Activated CD8-positive, alpha-beta memory T cell treated with anti-CD3 and anti-CD28 coated beads, Interleukin-2, amount 10 ng/mL, durations not matched to agents 7 days and 5 days (primary cell): ENCODE measurements at regions of chr11 and their contacts with region 1.

Region 1: DNA sequence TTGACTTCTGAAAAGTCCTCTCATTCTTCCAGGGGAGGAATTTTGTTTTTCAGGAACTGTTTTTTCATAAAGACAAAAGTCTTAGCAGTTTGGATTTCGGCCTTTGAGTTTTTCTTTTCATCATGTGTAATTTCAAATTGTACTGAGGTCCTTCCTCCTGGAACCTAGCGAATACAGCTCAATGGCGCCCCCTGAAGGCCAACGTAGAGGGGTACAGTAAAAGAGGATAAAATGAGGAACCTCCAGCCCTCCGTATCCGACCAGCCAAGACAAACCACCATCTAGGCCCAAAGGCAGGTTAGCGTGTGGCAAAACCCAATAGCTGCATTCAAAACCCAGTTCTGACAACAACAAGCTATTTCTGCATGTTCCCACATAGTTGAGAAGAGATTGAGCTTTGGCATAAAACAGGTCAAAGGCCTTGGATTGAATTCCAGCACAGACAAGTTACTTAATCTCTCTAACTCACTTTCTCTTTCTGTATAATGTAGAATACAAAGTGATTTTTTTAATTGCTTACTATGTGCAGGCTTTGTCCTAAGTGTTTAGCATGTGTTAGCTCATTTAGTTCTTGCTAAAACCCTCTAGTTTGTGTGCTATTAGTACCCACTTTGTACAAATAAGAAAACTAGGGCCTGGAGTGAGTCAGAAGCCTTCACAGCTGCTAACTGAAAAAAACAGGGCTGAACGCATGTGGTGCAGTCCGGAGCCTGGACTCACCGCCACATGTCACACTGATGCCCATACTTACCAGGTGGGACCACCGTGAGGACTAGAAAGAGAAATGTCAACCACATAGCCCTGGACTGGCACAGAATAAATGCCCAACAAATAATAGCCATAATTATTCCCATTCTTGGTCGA is 43.2 kb upstream of the ETS1 start:
- DNase-seq: peak; percentile 93
- ATAC-seq: peak; percentile 84
- H3K4me3 Mint-ChIP-seq: peak overlapping the region; percentile 52
- H3K27ac Mint-ChIP-seq: peak overlapping the region; percentile 93
- H3K4me1 Mint-ChIP-seq: peaks cover 67% of the 10 kb centered on the region
- H3K27me3 Mint-ChIP-seq: no peaks in the 10 kb centered on the region

Region 2: DNA sequence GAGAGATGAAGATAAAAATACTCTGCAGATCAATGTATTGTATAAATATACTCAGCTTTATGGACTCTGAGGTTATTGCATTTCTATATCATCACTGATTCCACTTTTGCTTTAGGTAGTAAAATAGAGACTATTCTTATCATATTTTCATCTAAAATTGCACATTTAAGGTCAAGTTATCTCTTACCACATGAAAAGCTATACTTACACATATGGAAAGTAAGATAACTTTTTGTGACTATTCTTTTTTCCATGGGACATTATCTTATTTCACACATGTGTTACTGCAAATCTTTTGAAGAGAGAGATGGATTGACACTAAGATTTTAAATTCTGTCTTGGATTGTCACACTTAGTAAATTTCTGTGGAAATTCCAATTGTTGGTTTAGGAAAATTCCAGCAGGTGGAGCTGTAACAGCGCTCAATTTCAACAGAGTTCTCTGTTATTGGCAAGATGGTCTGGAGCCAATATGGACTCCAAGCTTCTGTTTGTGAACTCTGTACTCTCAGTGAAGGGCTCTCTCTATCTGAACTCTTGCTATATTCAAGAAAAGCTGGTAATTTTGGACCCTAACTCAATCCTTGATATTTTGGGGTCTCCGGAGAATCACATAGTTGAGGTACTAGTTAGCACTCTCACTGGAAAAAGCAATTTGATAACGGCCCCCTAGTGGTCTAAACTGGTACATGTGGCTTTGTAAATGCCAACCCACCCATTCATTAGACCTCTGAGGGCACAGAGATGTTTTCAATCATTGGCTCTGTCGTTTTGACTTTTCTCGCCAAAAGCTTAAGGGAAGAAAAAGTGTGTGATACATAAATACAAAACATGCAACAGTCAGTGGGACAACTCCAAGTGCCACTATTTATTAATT is 472.9 kb before region 1 on chr11:
- CTCF ChIA-PET with region 1: interaction called, 73 read pairs
- DNase-seq: peak; percentile 67
- ATAC-seq: peak; percentile 91
- H3K4me3 Mint-ChIP-seq: peak overlapping the region; percentile 47
- H3K27ac Mint-ChIP-seq: peak overlapping the region; percentile 77
- H3K4me1 Mint-ChIP-seq: peaks cover 4% of the 10 kb centered on the region
- H3K27me3 Mint-ChIP-seq: peaks cover 9% of the 10 kb centered on the region

Region 3: DNA sequence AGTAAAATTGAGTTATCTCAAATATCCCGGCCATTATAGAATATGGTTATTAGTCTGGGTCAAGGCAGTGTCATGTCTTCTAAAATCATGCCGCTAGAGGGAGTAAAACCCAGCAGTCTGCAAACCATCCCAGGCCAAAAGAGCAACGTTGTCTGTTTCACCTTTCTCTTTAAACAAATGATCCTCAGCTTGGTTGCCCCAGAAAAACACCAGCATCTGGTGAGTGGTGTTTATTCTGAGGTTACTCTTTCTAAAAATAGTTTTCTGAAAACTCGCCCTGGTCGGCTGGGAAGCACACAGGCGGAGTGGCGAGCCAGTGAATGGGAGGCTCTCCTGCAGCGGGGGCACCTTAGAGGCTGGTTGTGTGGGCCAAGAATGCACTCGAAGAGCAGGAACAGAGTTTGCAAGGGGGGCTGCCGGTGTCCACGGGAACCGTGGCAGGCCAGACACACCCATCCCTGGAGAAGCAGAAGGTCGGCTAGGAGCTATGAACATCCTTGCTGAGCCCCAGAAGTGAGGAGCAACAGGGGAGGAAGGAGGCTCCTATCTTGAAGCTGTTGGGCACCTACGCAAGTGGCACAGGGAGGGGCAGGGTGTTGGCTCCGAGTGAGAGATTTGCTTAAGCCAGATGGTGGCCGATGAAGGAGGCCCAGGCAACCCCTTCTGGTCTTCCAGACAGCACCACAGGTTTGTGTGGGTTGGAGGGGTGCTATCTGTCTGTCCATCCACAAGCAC is 340.3 kb before region 1 on chr11:
- CTCF ChIA-PET with region 1: interaction called, 92 read pairs
- DNase-seq: peak; percentile 86
- ATAC-seq: peak; percentile 70
- H3K4me3 Mint-ChIP-seq: peak overlapping the region; percentile 86
- H3K27ac Mint-ChIP-seq: peak overlapping the region; percentile 92
- H3K4me1 Mint-ChIP-seq: peaks cover 86% of the 10 kb centered on the region
- H3K27me3 Mint-ChIP-seq: no peaks in the 10 kb centered on the region

Region 4: GRCh38 chr11:128465946-128466705 is 164.5 kb before region 1 on chr11:
- CTCF ChIA-PET with region 1: interaction called, 25 read pairs
- DNase-seq: no peak
- ATAC-seq: peak; percentile 5
- H3K4me3 Mint-ChIP-seq: peak overlapping the region; percentile 62
- H3K27ac Mint-ChIP-seq: peak overlapping the region; percentile 82
- H3K4me1 Mint-ChIP-seq: peaks cover 89% of the 10 kb centered on the region
- H3K27me3 Mint-ChIP-seq: no peaks in the 10 kb centered on the region

Region 5: GRCh38 chr11:128506999-128507611 is 123.5 kb before region 1 on chr11:
- CTCF ChIA-PET with region 1: interaction called, 22 read pairs
- DNase-seq: no peak
- ATAC-seq: peak; percentile 17
- H3K4me3 Mint-ChIP-seq: peak overlapping the region; percentile 99
- H3K27ac Mint-ChIP-seq: peak overlapping the region; percentile 86
- H3K4me1 Mint-ChIP-seq: peaks cover 97% of the 10 kb centered on the region
- H3K27me3 Mint-ChIP-seq: no peaks in the 10 kb centered on the region

Region 6: GRCh38 chr11:128552783-128553661 is 77.6 kb before region 1 on chr11:
- CTCF ChIA-PET with region 1: interaction called, 15 read pairs
- DNase-seq: peak; percentile 57
- ATAC-seq: peak; percentile 12
- H3K4me3 Mint-ChIP-seq: peak overlapping the region; percentile 47
- H3K27ac Mint-ChIP-seq: peak overlapping the region; percentile 87
- H3K4me1 Mint-ChIP-seq: peaks cover 64% of the 10 kb centered on the region
- H3K27me3 Mint-ChIP-seq: no peaks in the 10 kb centered on the region

Region 7: DNA sequence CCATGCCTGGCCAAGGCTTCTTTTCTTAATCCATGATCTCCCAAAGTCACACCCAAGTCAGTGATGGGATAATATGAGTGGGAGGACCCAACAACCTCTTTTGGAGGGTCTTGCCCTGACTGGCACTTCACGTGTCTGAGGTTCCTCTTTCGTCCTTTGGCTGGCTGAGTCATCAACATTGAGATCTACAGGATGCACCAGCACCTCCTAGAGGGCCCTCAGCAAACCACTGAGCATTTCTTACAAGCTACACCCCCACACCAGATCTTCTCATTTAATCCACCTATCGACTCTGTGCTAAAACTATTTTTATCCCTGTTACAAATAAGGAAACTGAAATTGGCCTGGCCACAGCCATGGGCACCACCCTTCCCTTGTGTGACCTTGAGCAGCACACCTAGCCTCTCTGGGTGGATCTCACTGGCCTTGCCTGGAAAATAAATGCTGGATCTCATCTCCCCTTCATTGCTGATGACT is 126.7 kb after region 1 on chr11:
- CTCF ChIA-PET with region 1: interaction called, 79 read pairs
- DNase-seq: peak; percentile 87
- ATAC-seq: peak; percentile 90
- H3K4me3 Mint-ChIP-seq: peak overlapping the region; percentile 27
- H3K27ac Mint-ChIP-seq: peak overlapping the region; percentile 92
- H3K4me1 Mint-ChIP-seq: peaks cover 63% of the 10 kb centered on the region
- H3K27me3 Mint-ChIP-seq: no peaks in the 10 kb centered on the region